Mammary epithelial cell (primary cell): ENCODE measurements at regions of chr11 and their contacts with region 1.

Region 1: DNA sequence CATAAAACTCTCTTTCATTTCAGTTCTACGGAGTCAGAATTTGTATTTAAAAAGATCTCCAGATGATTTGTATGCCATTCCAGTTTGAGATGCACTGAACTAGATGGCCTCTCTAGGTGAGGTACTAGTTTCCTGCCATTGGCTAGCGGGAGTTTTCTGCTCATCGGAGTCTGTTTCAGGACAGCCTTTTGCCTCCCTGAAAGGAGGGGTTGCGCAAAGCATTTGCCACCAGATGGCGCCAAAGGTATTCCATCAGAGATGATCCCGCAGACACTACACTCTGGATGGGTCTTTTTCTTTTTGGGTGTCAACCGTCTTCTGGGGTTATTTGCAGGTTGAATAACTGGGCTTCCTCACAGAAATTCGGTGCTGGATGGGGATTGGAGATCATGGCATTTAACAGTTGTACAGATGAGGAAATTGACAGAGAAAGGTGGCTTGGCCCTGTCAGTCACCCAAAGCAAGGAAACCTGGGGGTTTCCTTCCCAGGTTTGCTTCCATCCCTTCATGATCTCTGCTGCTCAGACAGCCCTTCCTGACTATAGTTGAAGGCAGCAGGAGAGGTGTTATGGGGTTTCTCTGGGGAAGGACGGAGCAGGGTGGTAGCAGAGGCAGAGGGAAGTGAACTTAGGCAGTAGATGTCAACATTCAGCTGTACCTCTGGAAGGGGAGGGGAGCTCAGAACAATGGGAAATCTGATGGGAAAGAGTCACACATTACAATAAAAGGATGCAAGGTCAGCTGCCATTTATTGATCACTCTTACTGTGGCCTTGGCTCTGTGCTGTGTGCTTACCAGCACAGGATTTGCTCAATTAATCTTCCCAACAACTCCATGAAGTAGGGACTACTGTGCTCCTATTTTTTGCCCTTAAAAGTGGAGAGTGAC is 81.6 kb downstream of the CCDC81 start:
- DNase-seq: peak; percentile 64
- H3K4me3 ChIP-seq: no peak overlapping the region
- H3K27ac ChIP-seq: no peak overlapping the region
- H3K4me1 ChIP-seq: peaks cover 32% of the 10 kb centered on the region
- H3K27me3 ChIP-seq: no peaks in the 10 kb centered on the region
- CTCF ChIP-seq: peak; percentile 85 to 90

Region 2: GRCh38 chr11:85595285-85595884 is 860.9 kb before region 1 on chr11:
- CTCF ChIA-PET with region 1: no interaction called
- dilution Hi-C with region 1: no loop called
- in situ Hi-C with region 1: no loop called
- intact Hi-C with region 1: loop called (anchors 5 kb)
- DNase-seq: peak; percentile 8
- H3K4me3 ChIP-seq: no peak overlapping the region
- H3K27ac ChIP-seq: no peak overlapping the region
- H3K4me1 ChIP-seq: no peaks in the 10 kb centered on the region
- H3K27me3 ChIP-seq: no peaks in the 10 kb centered on the region
- CTCF ChIP-seq: peak; percentile 34 to 59

Region 3: DNA sequence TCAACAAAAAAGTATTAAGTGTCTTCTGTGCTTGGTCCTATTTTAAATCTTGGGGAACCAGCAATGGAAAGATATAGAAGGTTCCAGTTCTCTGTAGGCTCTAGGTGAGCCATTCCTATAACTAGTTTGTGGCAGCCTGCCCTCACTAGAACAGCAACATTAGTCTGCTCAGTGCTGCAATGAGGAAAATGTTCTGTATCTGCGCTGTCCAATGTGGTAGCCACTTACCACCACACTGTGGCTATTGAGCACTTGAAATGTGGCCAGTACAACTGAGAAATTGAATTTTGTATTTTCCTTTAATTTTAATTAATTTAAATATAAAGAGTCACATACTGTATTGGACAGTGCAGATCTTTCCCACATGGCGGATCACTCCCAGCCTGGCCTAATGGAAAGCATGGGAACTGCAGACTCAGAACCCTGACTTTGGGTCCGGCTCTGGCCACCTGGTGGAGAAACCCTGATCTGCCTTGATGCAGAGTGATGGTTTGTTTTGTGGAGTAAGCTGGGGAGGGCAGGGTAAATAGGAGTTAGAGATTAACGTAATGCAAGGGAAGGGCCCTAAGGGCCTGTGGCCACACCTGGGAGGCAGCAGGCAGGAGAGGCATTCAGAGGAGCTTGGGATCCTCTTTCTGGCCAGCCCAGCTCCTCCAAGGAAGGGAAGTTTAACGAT is 115.1 kb after region 1 on chr11:
- CTCF ChIA-PET with region 1: no interaction called
- dilution Hi-C with region 1: no loop called
- in situ Hi-C with region 1: loop called in 1 of 2 experiments (anchors 5 kb)
- intact Hi-C with region 1: loop called (anchors 2 kb)
- DNase-seq: no peak
- H3K4me3 ChIP-seq: no peak overlapping the region
- H3K27ac ChIP-seq: no peak overlapping the region
- H3K4me1 ChIP-seq: peaks cover 8% of the 10 kb centered on the region
- H3K27me3 ChIP-seq: no peaks in the 10 kb centered on the region
- CTCF ChIP-seq: peak; percentile 49 to 61

Region 4: GRCh38 chr11:86632499-86633269 is 176.4 kb after region 1 on chr11:
- CTCF ChIA-PET with region 1: no interaction called
- dilution Hi-C with region 1: no loop called
- in situ Hi-C with region 1: no loop called
- intact Hi-C with region 1: loop called (anchors 1 kb)
- DNase-seq: peak; percentile 93
- H3K4me3 ChIP-seq: no peak overlapping the region
- H3K27ac ChIP-seq: peak overlapping the region; percentile 60
- H3K4me1 ChIP-seq: peaks cover 18% of the 10 kb centered on the region
- H3K27me3 ChIP-seq: no peaks in the 10 kb centered on the region
- CTCF ChIP-seq: peak in 1 of 2 donors; percentile 53

Region 5: GRCh38 chr11:86802601-86803051 is 346.3 kb after region 1 on chr11:
- CTCF ChIA-PET with region 1: no interaction called
- dilution Hi-C with region 1: loop called (anchors 25 kb)
- in situ Hi-C with region 1: no loop called
- intact Hi-C with region 1: loop called (anchors 1 kb)
- DNase-seq: peak; percentile 78
- H3K4me3 ChIP-seq: peak overlapping the region; percentile 64 to 84 (median 71)
- H3K27ac ChIP-seq: peak overlapping the region; percentile 75
- H3K4me1 ChIP-seq: peaks cover 48% of the 10 kb centered on the region
- H3K27me3 ChIP-seq: no peaks in the 10 kb centered on the region
- CTCF ChIP-seq: peak; percentile 54 to 59

Region 6: GRCh38 chr11:86919557-86920210 is 463.4 kb after region 1 on chr11:
- CTCF ChIA-PET with region 1: no interaction called
- dilution Hi-C with region 1: no loop called
- in situ Hi-C with region 1: no loop called
- intact Hi-C with region 1: loop called (anchors 1 kb)
- DNase-seq: peak; percentile 48
- H3K4me3 ChIP-seq: no peak overlapping the region
- H3K27ac ChIP-seq: no peak overlapping the region
- H3K4me1 ChIP-seq: peaks cover 14% of the 10 kb centered on the region
- H3K27me3 ChIP-seq: no peaks in the 10 kb centered on the region
- CTCF ChIP-seq: peak; percentile 55 to 72